ENCODE measurements at regions of chr6 and their contacts with region 1.

Region 1: GRCh38 chr6:69238067-69238466 is 558.7 kb downstream of the LMBRD1 start:
- DNase-seq: no peak

Region 2: DNA sequence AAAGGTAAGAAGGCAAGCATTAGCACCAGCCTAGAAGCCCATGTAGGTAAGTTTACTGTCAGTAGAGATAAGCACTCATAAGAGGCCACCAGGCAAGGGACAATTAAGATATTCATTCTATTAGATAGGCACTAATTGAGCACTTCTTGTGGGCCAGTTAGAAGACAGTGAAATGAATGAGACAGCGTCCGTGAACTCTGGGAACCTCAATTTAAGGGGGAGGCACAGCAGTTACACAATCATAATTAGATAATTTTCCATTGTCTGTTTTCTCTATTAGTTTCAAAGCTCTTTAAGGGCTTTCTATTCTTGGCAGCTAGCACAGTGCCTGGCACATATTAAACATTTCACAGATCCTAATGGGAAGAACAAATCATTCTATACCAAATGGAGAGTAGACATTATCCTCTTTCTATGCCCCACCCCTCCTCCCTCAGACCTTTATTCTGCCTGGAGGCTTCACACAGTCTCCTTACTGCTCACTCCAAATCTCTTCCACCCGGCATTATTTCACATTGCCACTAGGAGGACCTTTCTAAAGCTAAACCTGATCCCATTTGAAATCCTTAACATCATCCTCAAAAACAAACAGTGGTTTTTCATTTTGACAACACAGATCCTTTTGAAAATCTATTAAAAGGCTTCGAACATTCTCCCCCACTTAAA is 73.4 kb before region 1 on chr6:
- intact Hi-C with region 1: loop called in 1 of 2 experiments (anchors 2 kb)
- DNase-seq: no peak